ENCODE measurements at regions of chr18 and their contacts with region 1.

Region 1: DNA sequence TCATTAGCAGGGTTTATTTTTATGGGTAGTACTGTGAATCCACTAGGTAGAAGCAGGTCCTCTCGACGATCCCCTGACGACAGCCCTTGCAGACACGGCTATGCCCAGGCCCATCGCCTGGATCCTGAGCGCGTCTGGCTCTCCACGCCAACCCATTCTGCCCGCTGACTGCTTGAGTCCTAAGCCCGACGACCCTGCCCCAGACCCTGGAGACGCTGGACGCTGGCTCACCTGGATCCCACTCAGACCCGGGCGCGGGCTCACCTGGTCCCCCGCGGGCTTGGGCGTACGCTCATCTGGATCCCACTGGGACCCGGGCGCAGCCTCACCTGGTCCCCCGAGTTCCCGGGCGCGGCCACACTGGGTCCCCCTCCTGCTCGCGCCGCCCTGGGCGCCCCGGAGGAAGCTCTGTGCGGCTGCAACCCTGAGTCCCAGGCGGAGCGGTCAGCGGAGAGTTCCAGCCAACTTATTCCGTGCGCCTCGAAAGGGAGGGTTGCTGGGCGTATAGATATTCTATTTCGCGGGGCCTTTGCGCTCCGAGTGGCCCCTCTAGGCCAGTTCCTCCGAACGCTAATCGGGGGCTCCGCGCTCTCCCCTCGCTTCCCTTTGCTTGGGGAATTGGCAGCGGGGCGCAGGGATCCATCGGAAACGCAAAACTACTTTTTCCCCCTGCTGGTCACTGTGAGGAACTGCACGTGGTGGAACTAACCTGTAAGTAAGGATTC is 22.4 kb upstream of the RMP24 start:
- DNase-seq: no peak

Region 2: DNA sequence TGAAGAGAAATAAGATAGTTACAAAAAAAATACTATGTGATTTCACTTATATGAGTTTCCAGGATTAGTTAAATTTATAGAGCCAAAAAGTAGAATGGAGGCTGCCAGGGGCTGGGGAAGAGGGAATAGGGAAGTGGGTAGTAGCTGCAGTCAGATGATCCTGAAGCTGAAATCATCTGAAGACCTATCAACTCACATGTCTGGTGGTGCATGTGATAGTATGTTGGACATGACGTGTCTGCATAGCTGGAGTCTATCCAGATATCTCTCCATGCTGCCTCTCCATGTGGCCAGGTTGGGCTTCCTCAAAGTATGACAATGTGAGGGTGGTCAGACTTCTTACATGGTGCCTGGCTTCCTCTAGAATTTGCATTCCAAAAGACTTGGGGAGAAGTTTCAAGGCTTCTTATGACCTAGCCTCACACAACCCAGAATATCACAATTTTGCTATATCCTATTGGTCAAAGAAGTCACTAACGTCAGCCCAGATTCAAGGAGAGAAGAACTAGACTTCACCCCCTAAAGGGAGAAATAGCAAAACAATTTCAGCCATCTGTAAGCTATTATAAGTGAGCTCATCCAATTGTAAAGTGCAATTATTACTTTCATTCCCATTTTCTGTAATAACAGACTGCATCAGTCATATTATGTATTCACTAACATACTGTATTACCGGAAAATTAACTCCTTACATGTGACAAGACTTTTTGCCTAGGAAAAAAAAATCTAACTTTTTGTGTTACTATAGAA is 558.9 kb before region 1 on chr18:
- intact Hi-C with region 1: loop called in 1 of 2 experiments (anchors 10 kb)
- DNase-seq: no peak

Region 3: GRCh38 chr18:35756506-35757117 is 193.5 kb before region 1 on chr18:
- intact Hi-C with region 1: loop called in 1 of 2 experiments (anchors 5 kb)
- DNase-seq: no peak